ENCODE measurements at regions of chr5 and their contacts with region 1.

Region 1: GRCh38 chr5:54646356-54647101 is 129.0 kb downstream of the SNX18 start:
- DNase-seq: peak; percentile 8 to 80 (median 60)
- ATAC-seq: peak; percentile 83 to 85
- H3K4me3 Mint-ChIP-seq: peak overlapping the region; percentile 63 to 84 (median 77)
- H3K27ac Mint-ChIP-seq: peak overlapping the region; percentile 91 to 99 (median 95)
- H3K4me1 Mint-ChIP-seq: peaks cover 34 to 70% (median 57%) of the 10 kb centered on the region in 4 donors
- H3K27me3 Mint-ChIP-seq: no peaks in the 10 kb centered on the region

Region 2: DNA sequence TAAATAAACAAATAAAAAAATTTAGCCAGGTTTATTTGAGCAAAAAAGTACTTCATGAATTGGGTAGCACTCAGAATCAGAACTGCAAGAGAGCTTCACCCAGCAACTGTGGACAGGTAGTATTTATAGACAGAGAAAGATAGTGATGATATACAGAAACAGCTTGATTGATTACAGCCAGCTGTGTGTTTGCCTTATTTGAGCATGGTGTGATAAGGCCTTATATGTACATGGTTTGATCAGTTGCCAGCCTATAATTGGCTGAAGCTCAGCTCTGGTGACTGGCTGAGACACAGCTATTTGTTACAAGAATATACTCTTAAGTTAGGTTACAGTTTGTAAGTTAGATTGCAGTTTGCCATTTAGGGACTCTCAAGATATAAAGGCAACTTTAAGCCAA is 301.9 kb before region 1 on chr5:
- POLR2A ChIA-PET with region 1: no interaction called
- DNase-seq: no peak
- ATAC-seq: no peak
- H3K4me3 Mint-ChIP-seq: no peak overlapping the region
- H3K27ac Mint-ChIP-seq: no peak overlapping the region
- H3K4me1 Mint-ChIP-seq: no peaks in the 10 kb centered on the region
- H3K27me3 Mint-ChIP-seq: peaks cover 0 to 4% (median 3%) of the 10 kb centered on the region in 5 donors

Region 3: DNA sequence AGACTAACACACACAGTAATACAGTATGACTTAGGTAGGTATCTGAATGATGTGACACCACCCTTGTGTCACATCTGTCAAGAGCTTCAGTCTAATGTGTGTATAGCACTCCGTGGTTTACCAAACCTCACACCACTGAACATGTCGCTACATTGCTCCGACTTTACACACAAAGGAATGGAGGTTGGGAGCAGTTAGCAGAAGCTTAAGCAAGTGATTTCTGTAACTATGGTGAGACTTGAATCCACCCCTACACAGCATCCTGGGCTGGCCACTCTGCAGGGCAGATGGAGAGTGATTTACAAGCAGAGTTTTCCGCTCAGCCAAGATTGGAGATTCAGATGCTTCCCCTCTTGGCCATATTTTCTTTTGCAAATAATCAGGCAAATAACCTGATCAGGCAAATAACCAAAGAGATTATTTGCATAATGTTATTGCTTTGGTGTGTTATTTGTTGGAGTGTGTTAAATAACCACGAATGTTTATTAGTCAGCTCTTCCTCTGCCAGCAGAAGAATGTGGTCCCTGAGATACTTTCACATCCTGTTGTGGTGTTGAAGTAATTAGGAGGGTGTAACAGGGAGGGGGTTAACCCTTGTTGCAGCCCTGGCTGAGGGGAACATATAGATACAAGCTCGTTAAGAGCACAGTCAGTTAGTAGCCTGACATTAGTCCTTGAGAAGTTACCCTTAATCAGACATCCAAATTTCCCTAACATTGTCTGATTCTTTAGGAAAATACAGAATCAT is 36.2 kb before region 1 on chr5:
- POLR2A ChIA-PET with region 1: interaction called, 13 read pairs
- DNase-seq: peak in 5 of 10 donors; percentile 3 to 33 (median 21)
- ATAC-seq: peak; percentile 80
- H3K4me3 Mint-ChIP-seq: peak overlapping the region in 9 of 10 donors; percentile 40 to 71 (median 56)
- H3K27ac Mint-ChIP-seq: peak overlapping the region in 7 of 10 donors; percentile 42 to 83 (median 74)
- H3K4me1 Mint-ChIP-seq: peaks cover 11 to 45% (median 20%) of the 10 kb centered on the region in 4 donors
- H3K27me3 Mint-ChIP-seq: no peaks in the 10 kb centered on the region

Region 4: DNA sequence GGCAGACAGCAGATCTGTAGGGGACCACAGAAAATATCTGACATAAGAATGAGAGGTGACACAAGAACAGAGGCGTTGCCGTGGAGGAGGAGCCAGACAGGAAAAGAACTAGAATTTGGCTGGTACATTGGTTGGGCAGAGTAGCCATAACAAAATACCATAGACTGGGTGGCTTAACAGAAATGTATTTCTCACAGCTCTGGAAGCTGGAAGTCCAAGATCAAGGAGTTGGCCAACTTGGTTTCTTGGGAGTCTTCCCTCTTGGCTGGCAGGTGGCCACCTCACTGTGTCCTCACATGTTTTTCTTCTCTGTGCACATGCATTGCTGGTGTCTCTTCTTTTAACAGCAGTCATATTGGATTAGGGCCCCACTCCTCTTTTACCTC is 26.0 kb before region 1 on chr5:
- POLR2A ChIA-PET with region 1: no interaction called
- DNase-seq: no peak
- ATAC-seq: no peak
- H3K4me3 Mint-ChIP-seq: no peak overlapping the region
- H3K27ac Mint-ChIP-seq: peak overlapping the region in 2 of 10 donors; percentile 5 to 7
- H3K4me1 Mint-ChIP-seq: peaks cover 3 to 36% (median 16%) of the 10 kb centered on the region in 4 donors
- H3K27me3 Mint-ChIP-seq: no peaks in the 10 kb centered on the region

Region 5: GRCh38 chr5:54844905-54845566 is 198.5 kb after region 1 on chr5:
- POLR2A ChIA-PET with region 1: interaction called, 10 read pairs
- DNase-seq: peak in 3 of 10 donors; percentile 60 to 68 (median 64)
- ATAC-seq: peak; percentile 36 to 68
- H3K4me3 Mint-ChIP-seq: peak overlapping the region in 6 of 10 donors; percentile 30 to 75 (median 60)
- H3K27ac Mint-ChIP-seq: peak overlapping the region in 7 of 10 donors; percentile 9 to 65 (median 36)
- H3K4me1 Mint-ChIP-seq: peaks cover 4 to 11% (median 5%) of the 10 kb centered on the region in 4 donors
- H3K27me3 Mint-ChIP-seq: peaks cover 0 to 10% (median 6%) of the 10 kb centered on the region in 5 donors

Measured in naive thymus-derived CD8-positive, alpha-beta T cell (primary cell).